ENCODE measurements at regions of chr22 and their contacts with region 1.

Region 1: GRCh38 chr22:49970528-49971231 is 10.1 kb downstream of the PIM3 start:
- DNase-seq: peak; percentile 99
- ATAC-seq: peak; percentile 87
- H3K4me3 Mint-ChIP-seq: no peak overlapping the region
- H3K27ac Mint-ChIP-seq: peak overlapping the region; percentile 93
- H3K4me1 Mint-ChIP-seq: peaks cover 38% of the 10 kb centered on the region
- H3K27me3 Mint-ChIP-seq: no peaks in the 10 kb centered on the region

Region 2: DNA sequence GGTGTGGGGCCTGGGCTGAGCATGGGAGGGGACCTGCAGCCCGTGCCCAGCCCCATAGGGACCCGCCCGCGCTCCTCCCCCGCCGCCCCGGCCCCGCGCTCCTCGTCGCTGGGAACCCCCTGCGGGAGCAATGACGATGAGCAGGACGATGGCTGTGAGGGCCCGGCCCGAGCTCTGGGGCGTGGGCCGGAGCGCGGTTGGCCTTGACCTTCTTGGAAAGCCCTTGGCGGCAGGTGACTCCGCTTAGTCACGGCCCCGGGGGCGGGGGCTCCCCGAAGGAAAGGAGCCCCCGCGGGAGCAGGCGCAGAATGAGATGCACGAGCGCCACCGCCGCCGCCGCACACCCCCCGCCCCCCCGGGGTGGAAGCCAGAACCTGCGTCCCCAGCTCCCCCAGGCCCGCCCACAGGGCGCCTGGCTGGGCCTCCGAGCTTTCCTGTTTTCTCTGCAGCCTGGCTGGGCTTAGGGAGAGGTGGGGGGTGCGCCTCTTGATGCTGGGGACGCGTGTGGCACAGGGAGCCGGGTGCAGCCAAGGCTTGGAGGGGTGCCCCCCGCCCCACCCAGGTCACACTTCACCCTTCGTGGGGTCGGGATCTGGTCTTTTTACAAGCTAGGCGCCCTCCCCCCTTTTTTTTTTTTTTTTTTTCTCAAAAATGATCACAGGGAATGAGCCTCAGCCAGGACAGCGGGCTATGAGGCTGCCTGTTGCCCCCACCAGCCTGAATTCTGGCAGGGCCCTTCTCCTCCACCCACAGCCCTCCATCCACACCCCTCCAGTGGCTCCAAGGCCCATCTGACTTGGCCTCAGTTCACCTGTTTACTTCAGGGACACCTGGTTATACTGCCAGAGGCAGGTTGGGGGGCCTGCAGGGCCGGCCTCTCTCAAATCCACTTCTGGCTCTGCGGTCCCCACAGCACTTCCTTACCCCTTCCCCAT is 34.4 kb before region 1 on chr22:
- CTCF ChIA-PET with region 1: interaction called, 3 read pairs
- POLR2A ChIA-PET with region 1: interaction called, 15 read pairs
- intact Hi-C with region 1: loop called (anchors 2 kb)
- DNase-seq: peak; percentile 99
- ATAC-seq: peak; percentile 84
- H3K4me3 Mint-ChIP-seq: peak overlapping the region; percentile 64
- H3K27ac Mint-ChIP-seq: peak overlapping the region; percentile 85
- H3K4me1 Mint-ChIP-seq: peaks cover 43% of the 10 kb centered on the region
- H3K27me3 Mint-ChIP-seq: no peaks in the 10 kb centered on the region